Mucosa of descending colon (tissue), 3 donors: ENCODE measurements at regions of chr16 and their contacts with region 1.

Region 1: DNA sequence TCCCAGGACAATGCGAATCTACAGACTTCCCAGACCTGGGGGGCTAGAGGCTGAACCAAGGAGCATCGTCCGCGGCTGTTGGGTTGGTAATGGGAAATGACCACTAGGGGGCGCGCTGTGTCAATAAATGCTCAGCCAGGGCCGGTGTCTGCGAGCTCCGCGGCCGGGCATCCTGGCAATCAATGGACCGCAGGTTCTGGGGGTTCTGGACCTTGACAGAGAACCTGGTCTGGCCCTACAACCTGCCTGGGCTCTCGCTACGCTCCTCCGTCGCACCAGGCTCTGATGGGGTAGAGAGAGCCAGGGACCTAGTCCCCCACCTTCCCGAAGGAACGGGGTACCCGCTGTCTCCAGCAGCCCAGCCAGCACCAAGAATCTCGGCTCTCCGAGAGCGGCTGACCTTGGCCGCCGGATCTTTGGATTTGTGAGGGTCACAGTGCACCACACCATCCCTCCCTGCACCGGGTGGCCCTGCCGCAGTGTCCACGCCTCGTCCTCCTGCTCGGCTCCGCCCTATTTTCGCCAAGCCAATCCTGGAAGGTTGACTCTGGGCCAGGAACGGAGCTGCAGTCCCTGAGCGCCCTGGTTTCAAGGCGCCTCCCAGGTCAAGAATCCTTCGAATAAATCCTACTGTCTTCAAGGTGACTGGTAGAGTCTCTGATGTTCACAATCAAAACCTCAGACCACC is 20.4 kb upstream of the BEAN1 start:
- DNase-seq: peak; percentile 82 to 95 (median 88)
- ATAC-seq: peak; percentile 85
- H3K4me3 ChIP-seq: peak overlapping the region; percentile 12
- H3K4me1 ChIP-seq: peaks cover 3% of the 10 kb centered on the region
- CTCF ChIP-seq: peak; percentile 65

Region 2: GRCh38 chr16:66483689-66484481 is 77.2 kb after region 1 on chr16:
- intact Hi-C with region 1: loop called (anchors 2 to 5 kb)
- DNase-seq: peak; percentile 74 to 83 (median 82)
- ATAC-seq: peak; percentile 84
- H3K4me3 ChIP-seq: no peak overlapping the region
- H3K4me1 ChIP-seq: no peaks in the 10 kb centered on the region
- CTCF ChIP-seq: peak; percentile 88

Region 3: DNA sequence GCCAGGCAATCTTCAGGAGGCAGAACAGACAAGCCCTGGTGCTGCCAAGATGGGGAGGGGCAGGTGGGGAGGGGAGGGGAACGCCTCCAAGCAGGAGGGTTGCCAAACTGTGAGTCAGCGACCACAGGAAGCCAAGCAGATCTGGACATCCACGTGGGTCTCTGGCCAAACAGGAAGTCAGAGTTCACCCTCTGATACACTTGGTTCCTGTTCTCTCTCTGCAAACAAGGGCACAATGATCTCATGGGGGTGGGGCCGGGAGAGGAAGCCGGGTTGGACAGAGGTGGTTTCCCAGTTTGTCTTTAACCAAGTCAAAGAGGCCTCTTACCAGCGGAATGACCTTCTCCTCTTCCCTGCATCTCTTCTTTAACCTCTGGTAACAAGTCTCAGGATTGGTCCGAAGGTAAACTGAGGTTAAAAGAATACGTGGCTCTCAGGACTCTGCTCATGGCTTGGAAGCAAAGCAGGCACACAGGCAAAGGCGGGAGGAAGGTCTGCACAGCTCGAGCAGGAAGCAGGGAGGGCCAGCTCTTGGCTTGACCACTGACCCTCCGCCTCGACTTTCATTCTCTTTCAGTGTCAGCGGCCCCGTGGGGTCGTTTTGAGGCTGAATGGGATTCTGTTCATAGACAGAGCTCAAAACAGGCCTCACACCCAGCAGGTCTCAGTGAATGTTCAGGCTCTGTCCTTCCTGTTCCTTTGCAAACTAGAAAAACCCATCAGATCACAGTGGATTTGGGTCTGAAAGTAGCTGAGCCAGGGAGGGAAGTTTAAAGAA is 110.3 kb after region 1 on chr16:
- intact Hi-C with region 1: no loop called
- DNase-seq: peak; percentile 96 to 98 (median 97)
- ATAC-seq: peak; percentile 95
- H3K4me3 ChIP-seq: no peak overlapping the region
- H3K4me1 ChIP-seq: peaks cover 24% of the 10 kb centered on the region
- CTCF ChIP-seq: no peak

Region 4: DNA sequence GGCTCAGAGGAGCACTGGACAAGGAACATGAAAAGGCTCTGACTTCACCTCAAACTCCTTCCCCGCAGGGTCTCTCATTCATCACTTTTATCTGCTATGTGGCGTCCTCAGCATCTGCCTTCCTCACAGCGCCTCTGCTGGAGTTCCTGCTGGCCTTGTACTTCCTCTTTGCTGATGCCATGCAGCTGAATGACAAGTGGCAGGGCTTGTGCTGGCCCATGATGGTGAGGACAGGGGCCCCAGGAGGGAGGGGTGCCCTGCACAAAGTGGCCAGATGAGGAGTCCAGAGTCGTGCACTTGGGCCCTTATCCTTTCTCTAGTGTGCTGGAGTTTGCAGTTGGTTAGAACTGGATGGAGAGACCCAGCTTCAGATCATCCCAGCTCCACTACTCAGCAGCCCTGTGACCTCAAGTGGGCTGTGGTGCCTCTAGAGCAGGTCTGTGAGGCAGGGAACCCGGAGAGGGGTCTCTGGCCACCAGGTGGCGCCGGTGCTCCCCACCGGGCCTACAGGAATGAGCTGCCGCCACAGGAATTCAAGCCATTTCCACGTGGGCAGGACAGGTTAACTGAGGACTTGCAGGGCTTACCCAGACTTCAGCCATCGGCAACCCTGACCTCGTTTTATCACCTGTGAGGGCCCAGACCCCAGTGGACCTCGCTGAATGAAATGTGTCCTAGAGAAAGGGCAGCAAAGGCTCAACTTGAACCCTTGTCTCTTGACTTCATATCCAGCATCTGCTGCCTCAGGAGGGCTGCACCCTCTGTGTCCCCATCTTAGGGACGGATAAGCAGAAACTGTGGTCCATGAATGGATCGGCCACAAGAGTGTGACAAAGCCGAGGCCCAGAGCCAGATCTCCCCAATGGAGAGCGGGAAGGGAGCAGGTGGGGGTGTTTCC is 201.8 kb after region 1 on chr16:
- intact Hi-C with region 1: loop called in 1 of 2 experiments (anchors 10 kb)
- DNase-seq: peak; percentile 80 to 94 (median 89)
- ATAC-seq: peak; percentile 68
- H3K4me3 ChIP-seq: no peak overlapping the region
- H3K4me1 ChIP-seq: peaks cover 17% of the 10 kb centered on the region
- CTCF ChIP-seq: peak; percentile 89

Region 5: DNA sequence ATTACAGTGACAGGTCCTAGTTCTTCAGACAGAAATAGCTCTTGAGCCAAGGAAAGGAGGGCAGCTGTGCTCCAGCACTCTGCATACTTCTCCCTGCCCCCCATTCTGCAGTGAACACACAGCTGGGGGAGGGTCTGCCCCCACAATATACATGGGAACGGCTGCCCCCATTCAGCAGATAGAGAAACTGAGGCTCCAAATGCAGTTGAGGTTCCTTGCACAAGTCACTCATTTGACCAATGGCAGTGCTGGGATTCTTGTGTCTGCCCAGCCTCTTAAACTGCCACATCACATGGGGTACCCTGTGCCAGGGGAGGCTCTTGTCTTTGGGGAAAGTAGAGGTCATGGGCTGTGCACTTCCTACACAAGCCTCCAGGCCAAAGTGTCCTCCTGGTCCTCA is 462.7 kb after region 1 on chr16:
- intact Hi-C with region 1: loop called in 1 of 2 experiments (anchors 5 kb)
- DNase-seq: peak in 1 of 3 donors; percentile 27
- ATAC-seq: no peak
- H3K4me3 ChIP-seq: no peak overlapping the region
- H3K4me1 ChIP-seq: peaks cover 8% of the 10 kb centered on the region
- CTCF ChIP-seq: no peak